Lower leg skin (tissue), 4 donors: ENCODE measurements at regions of chr9 and their contacts with region 1.

Region 1: GRCh38 chr9:110183208-110184145 is 24.5 kb downstream of the C9orf152 start:
- DNase-seq: peak; percentile 70 to 87
- H3K4me3 ChIP-seq: no peak overlapping the region
- CTCF ChIP-seq: no peak
- POLR2A ChIP-seq: no peak

Region 2: DNA sequence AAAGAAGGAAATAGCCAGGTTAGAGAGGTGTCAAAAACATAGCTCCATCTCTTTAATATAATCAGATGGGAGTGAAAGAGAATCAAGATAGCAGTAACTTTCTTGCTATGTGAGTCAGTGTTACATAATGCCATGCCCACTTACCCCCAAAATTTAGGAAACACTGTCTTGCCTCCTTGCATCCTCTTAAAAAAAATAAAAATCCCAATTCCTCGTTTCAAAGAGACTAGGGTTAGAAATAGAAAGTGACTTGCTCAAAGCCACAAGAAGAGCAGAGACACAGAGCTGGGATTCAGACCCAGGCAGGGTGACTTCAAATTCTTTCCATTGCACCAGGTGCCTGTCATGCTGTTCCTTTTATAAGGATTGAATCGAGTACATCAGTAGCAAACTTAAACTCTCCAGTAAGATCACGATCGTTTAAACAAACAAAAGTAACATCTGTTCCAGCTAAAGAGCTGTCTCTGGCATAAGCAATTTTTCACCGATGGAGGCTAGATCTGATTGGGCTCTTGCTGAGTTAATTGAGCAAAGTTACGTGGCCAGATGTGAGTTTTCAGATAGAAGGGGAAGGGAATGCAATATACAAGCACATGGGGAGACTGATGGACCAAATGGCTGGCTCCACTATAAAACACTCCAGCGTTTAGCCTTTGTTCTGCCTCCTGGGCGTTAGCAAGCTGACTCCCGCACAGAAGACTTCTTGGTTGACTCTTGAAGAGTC is 226.6 kb before region 1 on chr9:
- intact Hi-C with region 1: no loop called
- DNase-seq: no peak
- H3K4me3 ChIP-seq: no peak overlapping the region
- CTCF ChIP-seq: no peak
- POLR2A ChIP-seq: no peak

Region 3: DNA sequence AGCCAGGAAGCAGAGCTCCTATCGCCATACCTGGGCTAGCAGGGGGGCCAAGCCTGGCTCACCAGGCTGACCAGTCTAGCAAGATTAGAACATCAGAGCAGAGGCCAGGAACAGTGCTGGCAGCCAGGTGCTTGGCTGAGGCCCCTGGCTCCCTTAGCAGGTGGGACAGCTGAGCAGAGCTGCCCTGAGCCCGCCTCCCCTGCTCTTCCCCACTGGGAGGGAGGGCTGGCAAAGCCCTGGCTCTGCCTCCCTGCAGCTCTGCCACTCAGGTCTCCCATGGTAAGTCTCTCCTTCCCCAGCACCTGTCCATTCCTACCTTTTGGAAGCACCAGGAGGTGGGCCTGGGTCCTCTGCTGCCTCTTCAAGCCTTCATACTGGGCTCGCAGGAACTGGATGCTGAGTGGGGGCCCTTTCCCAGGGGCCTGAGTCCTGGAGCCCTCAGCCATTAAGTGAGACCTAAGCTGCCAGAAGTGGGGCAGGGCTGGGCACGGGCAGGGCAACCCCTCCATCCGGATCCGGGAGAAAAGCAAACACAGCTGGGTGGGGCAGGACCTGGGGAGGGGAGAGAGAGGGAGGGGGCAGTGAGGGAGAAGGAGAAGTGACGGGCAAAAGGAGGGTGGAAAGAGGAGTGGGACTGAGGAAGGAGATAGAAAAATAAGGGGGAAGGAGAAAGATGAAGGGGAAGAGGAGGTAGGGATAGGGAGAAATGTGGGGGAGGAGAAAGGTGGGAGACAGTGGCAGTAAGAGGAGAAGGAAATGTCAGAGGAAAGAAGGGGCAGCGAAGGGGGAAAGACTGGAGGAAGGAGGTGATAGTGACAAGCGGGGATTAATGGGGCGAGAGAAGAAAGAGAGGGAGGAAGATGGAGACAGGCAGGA is 23.8 kb after region 1 on chr9:
- intact Hi-C with region 1: no loop called
- DNase-seq: no peak
- H3K4me3 ChIP-seq: no peak overlapping the region
- CTCF ChIP-seq: no peak
- POLR2A ChIP-seq: no peak

Region 4: GRCh38 chr9:110217656-110218099 is 34.2 kb after region 1 on chr9:
- intact Hi-C with region 1: loop called (anchors 5 kb)
- DNase-seq: no peak
- H3K4me3 ChIP-seq: no peak overlapping the region
- CTCF ChIP-seq: peak in 1 of 3 donors; percentile 67
- POLR2A ChIP-seq: no peak

Region 5: GRCh38 chr9:110282018-110282738 is 98.7 kb after region 1 on chr9:
- intact Hi-C with region 1: no loop called
- DNase-seq: no peak
- H3K4me3 ChIP-seq: no peak overlapping the region
- CTCF ChIP-seq: no peak
- POLR2A ChIP-seq: no peak

Region 6: DNA sequence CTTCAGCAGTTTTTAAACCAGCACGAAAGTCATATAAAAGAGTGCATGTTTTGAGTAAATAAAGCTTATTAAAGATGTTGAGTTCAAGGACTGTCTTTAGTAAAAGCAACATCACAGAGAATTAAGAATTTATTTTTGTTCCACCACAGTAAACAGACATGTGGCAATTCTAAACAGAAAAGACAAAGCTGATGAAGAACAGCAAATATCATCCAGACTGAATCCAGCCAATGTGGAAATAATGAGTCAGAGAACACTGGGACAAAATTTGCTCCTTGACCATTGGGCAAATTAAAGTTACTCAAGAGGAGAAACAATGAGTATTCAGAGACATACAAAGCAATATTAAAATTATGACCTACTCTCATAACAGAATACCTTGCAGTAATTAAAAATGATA is 1117.7 kb after region 1 on chr9:
- intact Hi-C with region 1: loop called (anchors 5 kb)
- DNase-seq: no peak
- H3K4me3 ChIP-seq: no peak overlapping the region
- CTCF ChIP-seq: no peak
- POLR2A ChIP-seq: no peak